Activated CD4-positive, alpha-beta T cell treated with anti-CD3 and anti-CD28 coated beads for 36 hours (primary cell): ENCODE measurements at regions of chr17 and their contacts with region 1.

Region 1: GRCh38 chr17:17836250-17836817 is 452 bp downstream of the SREBF1 start:
- DNase-seq: peak; percentile 99
- ATAC-seq: peak; percentile 74
- H3K4me3 Mint-ChIP-seq: peak overlapping the region; percentile 94
- H3K27ac Mint-ChIP-seq: peak overlapping the region; percentile 98
- H3K4me1 Mint-ChIP-seq: peaks cover 74% of the 10 kb centered on the region
- H3K27me3 Mint-ChIP-seq: no peaks in the 10 kb centered on the region

Region 2: GRCh38 chr17:17041571-17042380 is 794.6 kb before region 1 on chr17:
- CTCF ChIA-PET with region 1: no interaction called
- POLR2A ChIA-PET with region 1: no interaction called
- intact Hi-C with region 1: loop called in 1 of 2 experiments (anchors 5 kb)
- DNase-seq: peak; percentile 98
- ATAC-seq: peak; percentile 99
- H3K4me3 Mint-ChIP-seq: peak overlapping the region; percentile 69
- H3K27ac Mint-ChIP-seq: no peak overlapping the region
- H3K4me1 Mint-ChIP-seq: peaks cover 44% of the 10 kb centered on the region
- H3K27me3 Mint-ChIP-seq: no peaks in the 10 kb centered on the region

Region 3: GRCh38 chr17:17694169-17695081 is 141.9 kb before region 1 on chr17:
- CTCF ChIA-PET with region 1: interaction called, 3 read pairs
- POLR2A ChIA-PET with region 1: interaction called, 4 read pairs
- intact Hi-C with region 1: loop called in 1 of 2 experiments (anchors 1 kb)
- DNase-seq: peak; percentile 79
- ATAC-seq: peak; percentile 69
- H3K4me3 Mint-ChIP-seq: peak overlapping the region; percentile 81
- H3K27ac Mint-ChIP-seq: peak overlapping the region; percentile 98
- H3K4me1 Mint-ChIP-seq: peaks cover 66% of the 10 kb centered on the region
- H3K27me3 Mint-ChIP-seq: no peaks in the 10 kb centered on the region

Region 4: GRCh38 chr17:17849845-17850373 is 13.6 kb after region 1 on chr17:
- CTCF ChIA-PET with region 1: interaction called, 16 read pairs
- POLR2A ChIA-PET with region 1: interaction called, 31 read pairs
- intact Hi-C with region 1: loop called (anchors 1 kb)
- DNase-seq: peak; percentile 90
- ATAC-seq: peak; percentile 64
- H3K4me3 Mint-ChIP-seq: peak overlapping the region; percentile 34
- H3K27ac Mint-ChIP-seq: peak overlapping the region; percentile 95
- H3K4me1 Mint-ChIP-seq: peaks cover 72% of the 10 kb centered on the region
- H3K27me3 Mint-ChIP-seq: no peaks in the 10 kb centered on the region

Region 5: GRCh38 chr17:18087610-18088491 is 251.5 kb after region 1 on chr17 and contains the start of gene DRG2:
- CTCF ChIA-PET with region 1: no interaction called
- POLR2A ChIA-PET with region 1: no interaction called
- intact Hi-C with region 1: loop called in 1 of 2 experiments (anchors 1 kb)
- DNase-seq: peak; percentile 93
- ATAC-seq: peak; percentile 90
- H3K4me3 Mint-ChIP-seq: peak within 1 kb of the TSS; percentile 99
- H3K27ac Mint-ChIP-seq: peak within 1 kb of the TSS; percentile 98
- H3K4me1 Mint-ChIP-seq: peaks cover 22% of the 10 kb centered on the region
- H3K27me3 Mint-ChIP-seq: no peaks in the 10 kb centered on the region
- total RNA-seq, gene DRG2: 42.5 to 45.6 TPM